Aorta (tissue), 5 donors: ENCODE measurements at regions of chr10 and their contacts with region 1.

Region 1: DNA sequence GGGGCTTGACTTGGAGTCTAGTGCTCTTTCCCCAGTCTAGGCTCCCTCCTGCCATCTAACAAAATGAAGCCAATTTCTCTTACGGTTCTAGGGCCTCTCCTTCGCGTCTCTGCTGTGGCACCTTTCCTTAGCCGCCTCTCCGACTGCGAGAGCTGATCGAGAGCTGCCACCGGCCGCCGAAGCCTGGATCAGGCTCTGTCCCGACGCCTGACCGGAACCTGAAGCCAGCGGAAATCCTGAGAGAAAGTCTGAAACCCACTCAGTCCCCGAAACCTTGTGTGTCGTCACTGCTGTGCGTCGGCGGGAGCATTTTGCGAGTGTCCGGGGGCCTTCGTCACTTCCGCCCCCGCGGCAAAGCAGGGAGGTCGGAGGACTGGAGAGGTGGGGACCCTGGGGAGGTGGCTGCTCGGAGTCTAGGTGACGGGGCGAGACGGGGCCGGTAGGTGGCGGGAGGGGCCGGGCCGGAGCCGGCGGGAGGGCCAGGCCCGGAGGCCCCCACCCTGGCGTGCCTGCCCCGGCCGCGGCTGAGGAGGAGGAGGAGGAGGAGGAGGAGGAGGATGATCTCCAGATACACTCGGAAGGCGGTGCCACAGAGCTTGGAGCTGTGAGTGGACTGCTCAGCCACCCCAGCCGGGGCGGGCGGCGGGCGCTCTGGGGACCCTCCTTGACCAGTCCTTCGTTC is at the starts of genes ECD and FAM149B1:
- DNase-seq: peak; percentile 97 to 98
- ATAC-seq: peak; percentile 98
- H3K4me3 ChIP-seq: peak within 1 kb of the TSS; percentile 88 to 91
- H3K27ac ChIP-seq: peak within 1 kb of the TSS; percentile 91 to 92
- H3K4me1 ChIP-seq: no peaks in the 10 kb centered on the region
- H3K27me3 ChIP-seq: no peaks in the 10 kb centered on the region
- total RNA-seq, gene ECD: 23.7 to 25.8 TPM
- total RNA-seq, gene FAM149B1: 20.0 to 22.7 TPM

Region 2: DNA sequence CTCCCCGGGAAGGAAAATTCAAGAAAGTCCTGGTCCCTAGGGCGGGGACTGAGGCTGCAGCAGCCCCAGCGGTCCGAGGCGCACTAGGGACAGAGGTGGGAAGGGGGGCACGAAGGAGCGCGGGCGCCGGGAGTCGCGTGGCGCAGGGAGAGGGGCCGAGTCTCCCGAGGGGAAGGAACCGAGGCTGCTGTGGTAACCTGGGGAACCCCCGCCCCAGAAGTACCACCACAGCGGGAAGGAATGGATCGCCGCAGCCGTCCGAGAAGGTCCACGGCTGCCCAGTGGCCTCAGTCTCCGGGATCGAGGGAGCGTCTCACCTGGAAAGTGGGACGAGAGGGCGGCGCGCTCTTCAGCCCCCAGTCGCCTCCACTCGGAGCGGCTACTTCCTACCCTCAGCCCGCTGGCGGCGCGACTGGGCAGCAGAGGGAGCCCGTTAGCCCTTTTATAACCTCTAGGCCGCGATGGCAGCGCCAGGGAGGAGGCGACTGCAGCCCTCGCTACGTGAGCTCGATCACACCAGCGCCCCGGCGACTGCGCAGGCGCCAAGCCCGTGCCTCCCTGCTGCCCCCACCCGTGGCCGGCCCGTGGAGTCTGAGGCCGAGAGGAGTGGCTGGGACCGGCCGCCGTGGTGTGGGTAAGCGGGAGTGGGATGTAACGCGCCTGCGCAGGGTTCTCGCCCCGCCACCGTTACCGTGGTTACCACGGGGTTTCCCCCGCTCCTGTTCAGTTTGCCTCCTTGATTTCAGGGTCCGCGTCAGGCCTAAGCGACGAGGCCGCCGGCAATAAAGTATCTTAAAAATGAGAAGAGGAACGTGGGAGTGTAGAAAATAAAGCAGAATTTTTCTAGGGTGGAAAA is 71.2 kb before region 1 on chr10 and contains the start of gene P4HA1:
- intact Hi-C with region 1: loop called (anchors 5 to 10 kb)
- DNase-seq: peak; percentile 100
- ATAC-seq: peak; percentile 98
- H3K4me3 ChIP-seq: peak within 1 kb of the TSS; percentile 76 to 87
- H3K27ac ChIP-seq: peak within 1 kb of the TSS; percentile 57 to 66
- H3K4me1 ChIP-seq: peaks cover 0 to 2% of the 10 kb centered on the region in 2 donors
- H3K27me3 ChIP-seq: no peaks in the 10 kb centered on the region
- total RNA-seq, gene P4HA1: 43.5 to 72.5 TPM

Region 3: DNA sequence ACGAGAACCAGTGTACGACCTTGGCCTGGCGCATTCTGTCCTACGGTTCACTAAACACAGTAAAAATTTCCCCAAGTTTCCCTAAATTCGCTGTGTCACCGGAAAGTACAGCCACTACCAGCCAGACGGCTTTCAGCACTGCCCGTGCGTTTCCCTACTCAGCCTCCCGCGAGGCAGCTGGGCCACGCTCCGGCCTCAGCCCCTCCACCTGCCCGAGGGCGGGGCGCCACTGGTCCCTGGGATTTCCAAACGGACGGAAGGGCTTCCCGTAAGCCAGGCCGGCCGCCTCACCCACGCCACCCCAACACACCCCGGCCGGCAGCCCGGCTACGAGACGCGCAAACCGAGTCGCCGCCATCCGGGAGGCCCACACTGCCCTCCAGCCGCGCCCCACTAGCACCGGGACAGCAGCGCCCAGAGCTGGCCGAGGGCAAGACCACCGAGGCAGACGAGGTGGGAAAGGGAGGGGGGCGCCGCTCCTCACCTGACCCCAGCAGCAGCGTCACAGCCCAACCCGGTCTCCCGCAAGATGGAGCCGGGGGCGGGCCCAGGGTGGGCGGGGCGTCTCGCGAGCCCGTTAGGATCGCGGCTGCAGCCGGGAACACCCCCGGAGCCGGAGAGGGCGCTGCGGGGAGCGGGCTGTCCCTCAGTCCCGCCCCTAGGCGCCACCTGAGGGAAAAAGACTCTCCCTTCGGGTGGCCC is 245.8 kb after region 1 on chr10 and contains the start of gene ANXA7:
- intact Hi-C with region 1: no loop called
- DNase-seq: peak; percentile 96 to 98
- ATAC-seq: peak; percentile 100
- H3K4me3 ChIP-seq: peak within 1 kb of the TSS; percentile 60 to 81
- H3K27ac ChIP-seq: peak within 1 kb of the TSS; percentile 47 to 91
- H3K4me1 ChIP-seq: no peaks in the 10 kb centered on the region
- H3K27me3 ChIP-seq: no peaks in the 10 kb centered on the region
- total RNA-seq, gene ANXA7: 116 to 125 TPM